ENCODE measurements at regions of chr1 and their contacts with region 1.

Region 1: DNA sequence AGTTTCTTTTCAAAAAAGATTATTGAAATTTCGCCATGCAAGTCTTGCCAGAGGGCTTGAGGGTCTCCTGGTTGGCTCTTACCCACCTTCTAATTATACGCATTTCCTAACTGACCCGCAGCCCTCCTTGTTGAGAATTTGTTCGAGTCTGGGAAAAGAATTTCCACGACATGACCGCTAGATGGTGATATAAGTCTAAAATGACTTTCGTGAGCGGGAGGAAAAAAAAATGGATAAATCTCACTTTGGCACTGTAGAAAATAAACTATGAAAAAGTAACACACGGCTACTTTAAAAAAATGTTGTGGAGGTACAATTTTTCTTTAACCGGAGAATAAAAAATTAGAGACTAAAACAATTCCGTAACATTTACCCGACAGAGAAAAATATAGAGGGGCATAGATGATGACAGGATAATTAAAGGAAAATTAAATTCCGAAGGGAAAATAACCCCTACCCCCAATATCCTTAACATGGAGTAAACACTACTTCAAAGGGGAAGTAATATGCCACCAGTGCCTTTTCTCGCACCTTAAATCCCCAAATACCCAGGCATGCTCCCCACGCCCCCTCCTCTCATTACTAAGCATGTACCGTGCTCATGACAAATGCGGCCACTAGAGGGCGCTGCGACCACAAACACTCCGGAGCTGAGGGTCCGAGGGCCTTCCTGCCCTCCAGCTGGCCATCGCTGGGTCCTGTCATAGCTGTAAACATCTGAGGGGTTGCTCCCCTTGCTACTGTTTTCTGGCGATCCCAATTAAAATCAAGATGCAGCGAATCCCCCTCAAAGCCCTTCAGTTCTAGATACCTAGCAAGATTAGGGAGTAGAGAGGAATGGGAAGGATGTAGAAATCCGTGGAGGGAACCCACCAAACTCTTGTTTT is 266.9 kb downstream of the ASTN1 start:
- DNase-seq: peak; percentile 28
- H3K4me3 ChIP-seq: no peak overlapping the region
- H3K27ac ChIP-seq: no peak overlapping the region
- H3K4me1 ChIP-seq: peaks cover 0 to 7% (median 3%) of the 10 kb centered on the region in 4 donors
- H3K27me3 ChIP-seq: peaks cover 11% of the 10 kb centered on the region
- CTCF ChIP-seq: peak; percentile 52 to 67 (median 63)
- EP300 ChIP-seq: no peak
- POLR2A ChIP-seq: no peak

Region 2: GRCh38 chr1:176866011-176866714 is 31.4 kb before region 1 on chr1:
- in situ Hi-C with region 1: no loop called
- intact Hi-C with region 1: no loop called
- DNase-seq: no peak
- H3K4me3 ChIP-seq: no peak overlapping the region
- H3K27ac ChIP-seq: no peak overlapping the region
- H3K4me1 ChIP-seq: no peaks in the 10 kb centered on the region
- H3K27me3 ChIP-seq: no peaks in the 10 kb centered on the region
- CTCF ChIP-seq: no peak
- EP300 ChIP-seq: no peak
- POLR2A ChIP-seq: no peak

Region 3: GRCh38 chr1:177170756-177171535 is 273.4 kb after region 1 on chr1 and contains the start of gene BRINP2:
- in situ Hi-C with region 1: loop called in 1 of 4 experiments (anchors 10 kb)
- intact Hi-C with region 1: no loop called
- DNase-seq: peak; percentile 15
- H3K4me3 ChIP-seq: peak within 1 kb of the TSS in 2 of 4 donors; percentile 18 to 39
- H3K27ac ChIP-seq: no peak within 1 kb of the TSS
- H3K4me1 ChIP-seq: peaks cover 0 to 11% (median 5%) of the 10 kb centered on the region in 4 donors
- H3K27me3 ChIP-seq: peaks cover 67% of the 10 kb centered on the region
- CTCF ChIP-seq: no peak
- EP300 ChIP-seq: no peak
- POLR2A ChIP-seq: no peak
- total RNA-seq, gene BRINP2: not detected

Region 4: GRCh38 chr1:177333936-177334595 is 436.5 kb after region 1 on chr1:
- in situ Hi-C with region 1: loop called in 1 of 4 experiments (anchors 25 kb)
- intact Hi-C with region 1: no loop called
- DNase-seq: no peak
- H3K4me3 ChIP-seq: no peak overlapping the region
- H3K27ac ChIP-seq: no peak overlapping the region
- H3K4me1 ChIP-seq: no peaks in the 10 kb centered on the region
- H3K27me3 ChIP-seq: no peaks in the 10 kb centered on the region
- CTCF ChIP-seq: peak in 4 of 5 experiments; percentile 19 to 34 (median 23)
- EP300 ChIP-seq: no peak
- POLR2A ChIP-seq: no peak

Region 5: DNA sequence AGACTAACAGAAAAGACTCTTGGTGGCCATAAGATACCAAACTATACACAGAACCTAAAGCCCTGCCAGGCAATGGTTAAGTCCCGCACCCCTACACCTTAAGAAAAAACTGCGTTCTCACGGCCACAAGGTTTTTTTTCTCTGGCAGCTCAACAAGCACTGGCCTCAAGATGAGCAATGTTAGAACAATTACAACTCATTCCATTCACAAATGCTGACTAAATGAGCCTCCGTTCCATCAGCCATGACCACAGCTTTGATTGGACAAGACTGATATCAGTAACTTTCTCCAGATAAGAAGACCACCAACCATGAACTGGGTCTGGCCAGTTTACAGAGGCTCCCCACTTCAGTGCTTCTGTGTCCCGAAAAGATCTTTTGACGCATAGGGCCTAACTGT is 1040.3 kb after region 1 on chr1:
- in situ Hi-C with region 1: loop called in 3 of 4 experiments (anchors 25 kb)
- intact Hi-C with region 1: loop called (anchors 10 kb)
- DNase-seq: no peak
- H3K4me3 ChIP-seq: no peak overlapping the region
- H3K27ac ChIP-seq: no peak overlapping the region
- H3K4me1 ChIP-seq: no peaks in the 10 kb centered on the region
- H3K27me3 ChIP-seq: no peaks in the 10 kb centered on the region
- CTCF ChIP-seq: no peak
- EP300 ChIP-seq: no peak
- POLR2A ChIP-seq: no peak

Region 6: GRCh38 chr1:177948336-177948972 is 1050.9 kb after region 1 on chr1:
- in situ Hi-C with region 1: loop called in 3 of 4 experiments (anchors 25 kb)
- intact Hi-C with region 1: no loop called
- DNase-seq: peak; percentile 52
- H3K4me3 ChIP-seq: no peak overlapping the region
- H3K27ac ChIP-seq: no peak overlapping the region
- H3K4me1 ChIP-seq: no peaks in the 10 kb centered on the region
- H3K27me3 ChIP-seq: no peaks in the 10 kb centered on the region
- CTCF ChIP-seq: peak; percentile 82 to 90 (median 87)
- EP300 ChIP-seq: no peak
- POLR2A ChIP-seq: no peak

Measured in transverse colon (tissue), 4 donors.